A673 (cell line): ENCODE measurements at regions of chr4 and their contacts with region 1.

Region 1: GRCh38 chr4:142126890-142127497 is 490.6 kb downstream of the IL15 start:
- DNase-seq: peak; percentile 78
- H3K4me3 ChIP-seq: no peak overlapping the region
- H3K27ac ChIP-seq: no peak overlapping the region
- H3K4me1 ChIP-seq: peaks cover 9% of the 10 kb centered on the region
- H3K27me3 ChIP-seq: no peaks in the 10 kb centered on the region
- CTCF ChIP-seq: peak; percentile 86

Region 2: DNA sequence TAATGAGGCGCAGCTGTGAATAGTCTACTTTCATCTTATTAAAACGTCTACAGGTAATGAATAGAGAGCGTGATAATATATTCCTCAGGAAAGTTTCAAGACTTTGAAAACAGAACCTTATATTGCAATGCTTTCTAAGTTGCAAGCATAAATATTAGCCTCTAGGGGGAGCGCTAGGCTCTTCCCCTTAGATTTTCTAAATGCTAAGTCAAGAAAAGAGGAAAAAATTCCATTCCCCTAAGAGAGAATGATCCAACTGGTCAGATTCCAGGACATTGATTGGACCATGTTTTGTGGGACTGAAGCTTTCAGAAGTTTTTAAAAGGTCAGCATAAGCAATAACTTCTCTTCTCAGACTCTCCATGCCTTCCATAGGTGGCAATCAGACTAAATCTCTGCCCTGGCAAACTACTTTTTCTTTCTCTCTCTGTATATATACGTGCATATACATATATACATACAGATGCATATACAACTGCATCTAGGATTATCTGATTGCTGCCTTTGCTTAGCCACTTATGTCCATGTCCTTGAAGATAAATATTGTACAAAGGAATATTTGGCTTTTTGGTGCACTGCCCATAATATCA is 226.2 kb after region 1 on chr4:
- CTCF ChIA-PET with region 1: no interaction called
- POLR2A ChIA-PET with region 1: no interaction called
- intact Hi-C with region 1: loop called (anchors 10 kb)
- DNase-seq: peak; percentile 70
- H3K4me3 ChIP-seq: no peak overlapping the region
- H3K27ac ChIP-seq: no peak overlapping the region
- H3K4me1 ChIP-seq: peaks cover 27% of the 10 kb centered on the region
- H3K27me3 ChIP-seq: no peaks in the 10 kb centered on the region
- CTCF ChIP-seq: peak; percentile 91

Region 3: DNA sequence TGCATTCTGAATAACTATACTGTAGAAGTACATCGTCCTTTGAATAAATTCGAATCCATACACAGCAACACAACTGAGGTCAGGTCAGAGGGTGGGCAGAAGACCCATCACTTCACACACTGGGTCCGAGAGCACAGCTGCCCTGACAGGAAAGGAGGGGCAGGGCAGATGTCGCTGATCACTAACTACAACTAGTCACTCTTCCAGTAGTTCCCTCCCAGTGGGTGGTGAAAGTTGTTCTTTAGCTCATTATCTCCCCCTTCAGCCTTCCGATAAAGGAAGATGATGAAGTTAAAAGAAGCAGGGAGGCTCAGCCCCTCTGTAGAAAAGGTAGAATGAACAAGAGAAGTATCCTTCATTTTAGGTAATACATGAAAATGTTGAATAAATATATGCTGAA is 440.2 kb after region 1 on chr4:
- CTCF ChIA-PET with region 1: no interaction called
- POLR2A ChIA-PET with region 1: no interaction called
- intact Hi-C with region 1: loop called (anchors 10 kb)
- DNase-seq: peak; percentile 68
- H3K4me3 ChIP-seq: no peak overlapping the region
- H3K27ac ChIP-seq: no peak overlapping the region
- H3K4me1 ChIP-seq: peaks cover 12% of the 10 kb centered on the region
- H3K27me3 ChIP-seq: no peaks in the 10 kb centered on the region
- CTCF ChIP-seq: peak; percentile 45; the same call in 1 of the 2 replicates

Region 4: DNA sequence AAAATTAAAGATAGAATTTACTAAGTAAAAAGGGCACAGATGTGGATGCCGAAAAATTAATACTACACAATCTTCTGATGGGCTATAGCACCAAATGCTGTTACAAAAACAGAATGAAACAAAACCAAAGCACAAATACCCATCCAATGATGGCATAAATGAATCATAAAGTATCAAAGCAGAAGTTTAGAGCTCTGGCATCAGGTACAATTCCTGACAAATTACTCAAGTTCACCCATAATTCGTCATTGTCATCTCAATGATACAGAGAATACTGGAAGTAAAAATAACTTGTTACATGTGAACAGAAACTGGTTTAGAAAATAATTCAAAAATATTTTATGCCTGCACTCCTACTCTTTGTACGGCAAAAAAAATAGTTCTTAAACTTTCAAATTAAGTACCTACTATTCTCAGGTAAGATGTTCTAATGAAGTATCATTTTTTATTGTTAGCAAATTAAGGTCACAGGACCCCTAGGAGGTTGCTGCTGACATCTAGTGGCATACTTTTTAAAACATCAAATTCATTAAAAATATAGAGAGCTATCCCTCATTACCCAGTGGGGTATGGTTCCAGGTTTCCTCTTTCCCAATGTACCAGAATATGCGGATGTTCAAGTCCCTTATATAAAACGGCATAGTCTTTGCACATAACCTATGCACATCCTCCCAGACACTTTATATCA is 593.0 kb after region 1 on chr4:
- CTCF ChIA-PET with region 1: no interaction called
- POLR2A ChIA-PET with region 1: no interaction called
- intact Hi-C with region 1: loop called (anchors 5 kb)
- DNase-seq: peak; percentile 48
- H3K4me3 ChIP-seq: no peak overlapping the region
- H3K27ac ChIP-seq: no peak overlapping the region
- H3K4me1 ChIP-seq: no peaks in the 10 kb centered on the region
- H3K27me3 ChIP-seq: no peaks in the 10 kb centered on the region
- CTCF ChIP-seq: peak; percentile 61

Region 5: DNA sequence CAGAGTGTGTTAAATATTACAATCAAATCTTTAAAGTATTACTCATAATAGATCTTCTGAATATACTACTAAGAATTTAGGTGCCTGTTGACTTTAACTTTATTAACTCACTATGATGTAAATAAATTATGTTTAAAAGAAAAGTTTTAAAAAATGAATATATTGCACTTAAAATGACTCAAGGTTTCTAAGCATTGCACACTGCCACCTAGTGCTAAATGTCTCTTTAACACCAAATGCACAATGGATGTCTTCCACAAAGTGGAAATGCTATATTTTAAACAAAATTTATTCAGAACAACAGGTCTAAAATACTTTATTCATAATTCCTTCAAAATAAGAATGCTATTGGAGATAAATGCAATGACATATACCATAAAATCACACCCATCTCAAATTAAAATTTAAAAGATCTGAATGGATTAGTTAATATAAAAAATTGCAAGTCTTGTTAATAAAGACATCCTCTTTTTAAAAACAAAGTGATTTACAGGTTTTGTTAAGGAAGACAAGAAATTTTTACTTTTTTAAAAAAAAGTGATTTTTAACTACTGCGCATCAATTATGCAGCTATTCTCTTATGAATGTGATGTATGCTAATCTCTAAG is 713.6 kb after region 1 on chr4:
- CTCF ChIA-PET with region 1: no interaction called
- POLR2A ChIA-PET with region 1: no interaction called
- intact Hi-C with region 1: loop called (anchors 2 kb)
- DNase-seq: peak; percentile 35
- H3K4me3 ChIP-seq: no peak overlapping the region
- H3K27ac ChIP-seq: no peak overlapping the region
- H3K4me1 ChIP-seq: no peaks in the 10 kb centered on the region
- H3K27me3 ChIP-seq: peaks cover 28% of the 10 kb centered on the region
- CTCF ChIP-seq: peak; percentile 73

Region 6: GRCh38 chr4:142846729-142847596 is 720.0 kb after region 1 on chr4:
- CTCF ChIA-PET with region 1: no interaction called
- POLR2A ChIA-PET with region 1: no interaction called
- intact Hi-C with region 1: loop called (anchors 2 kb)
- DNase-seq: no peak
- H3K4me3 ChIP-seq: peak overlapping the region; percentile 44
- H3K27ac ChIP-seq: no peak overlapping the region
- H3K4me1 ChIP-seq: no peaks in the 10 kb centered on the region
- H3K27me3 ChIP-seq: peaks cover 65% of the 10 kb centered on the region
- CTCF ChIP-seq: 0 out of 2 replicates have a peak, but pooled peaks have one; percentile 13

Region 7: GRCh38 chr4:143025081-143025704 is 898.2 kb after region 1 on chr4:
- CTCF ChIA-PET with region 1: no interaction called
- POLR2A ChIA-PET with region 1: no interaction called
- intact Hi-C with region 1: loop called (anchors 10 kb)
- DNase-seq: peak; percentile 52
- H3K4me3 ChIP-seq: no peak overlapping the region
- H3K27ac ChIP-seq: no peak overlapping the region
- H3K4me1 ChIP-seq: no peaks in the 10 kb centered on the region
- H3K27me3 ChIP-seq: no peaks in the 10 kb centered on the region
- CTCF ChIP-seq: peak; percentile 53